ENCODE measurements at regions of chr19 and their contacts with region 1.

Region 1: DNA sequence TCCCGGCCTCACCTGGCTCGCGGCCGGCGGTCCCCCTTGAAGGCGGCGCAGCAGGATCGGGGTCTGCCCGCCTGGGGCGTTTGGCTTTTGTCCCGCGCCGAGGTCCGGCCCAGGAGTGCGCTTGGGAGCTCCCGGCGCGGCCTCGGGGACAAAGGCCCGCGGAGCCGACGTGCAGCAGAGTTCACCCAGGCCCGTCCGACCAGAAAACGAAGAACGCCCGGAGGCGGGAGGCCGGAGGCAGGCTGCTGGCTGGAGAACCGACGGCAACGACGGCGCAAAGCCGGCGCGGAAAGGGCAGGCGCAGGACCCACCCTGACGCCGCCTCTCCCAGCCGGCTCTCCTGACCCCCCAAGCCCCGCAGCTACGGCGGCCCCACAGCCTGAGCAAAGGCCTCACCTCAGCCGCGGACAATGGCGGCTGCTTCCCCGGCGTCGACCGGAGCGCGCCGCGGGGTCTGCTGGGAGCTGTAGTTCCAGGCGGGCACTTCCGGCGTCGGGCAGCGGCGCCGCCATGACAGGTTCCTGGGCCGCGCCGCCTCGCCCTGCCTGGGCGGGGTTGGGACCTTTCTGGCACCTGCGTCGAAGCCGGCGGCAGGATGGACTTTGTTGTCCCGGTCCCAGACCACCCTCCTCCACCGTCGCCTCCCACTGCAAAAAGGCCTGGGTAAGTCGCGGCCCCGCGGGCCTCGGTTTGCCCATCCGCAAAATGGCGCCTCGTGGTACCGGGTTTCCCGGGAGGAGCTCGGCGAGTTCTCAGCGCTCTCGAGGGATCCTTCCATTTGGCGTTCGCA is at the start of gene ZNF606:
- DNase-seq: peak; percentile 85
- H3K4me3 Mint-ChIP-seq: peak within 1 kb of the TSS; percentile 77
- H3K27ac Mint-ChIP-seq: peak within 1 kb of the TSS; percentile 77
- H3K4me1 Mint-ChIP-seq: peaks cover 30% of the 10 kb centered on the region
- H3K27me3 Mint-ChIP-seq: no peaks in the 10 kb centered on the region
- total RNA-seq, gene ZNF606: 9.6 to 9.7 TPM

Region 2: DNA sequence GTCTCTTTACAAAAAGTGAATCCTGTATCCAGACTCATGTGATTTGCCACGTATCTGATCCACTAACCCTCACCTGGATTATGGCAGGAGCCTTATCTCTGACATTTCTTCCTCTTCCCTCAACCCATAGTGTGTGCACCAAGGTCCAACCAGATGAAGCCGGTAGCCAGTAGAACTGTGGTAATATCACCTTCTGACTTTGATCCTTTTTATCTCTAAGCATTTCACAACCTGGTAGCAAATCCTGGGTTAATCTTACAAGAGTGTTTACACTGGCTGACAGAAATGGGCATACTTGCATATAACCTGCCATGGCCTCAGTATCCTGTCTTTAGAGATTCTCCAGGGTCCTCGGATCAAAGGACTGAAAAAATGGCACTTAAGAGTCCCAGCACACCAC is 88.0 kb before region 1 on chr19:
- CTCF ChIA-PET with region 1: no interaction called
- POLR2A ChIA-PET with region 1: interaction called, 17 read pairs
- DNase-seq: no peak
- H3K4me3 Mint-ChIP-seq: peak overlapping the region; percentile 47
- H3K27ac Mint-ChIP-seq: no peak overlapping the region
- H3K4me1 Mint-ChIP-seq: peaks cover 31% of the 10 kb centered on the region
- H3K27me3 Mint-ChIP-seq: no peaks in the 10 kb centered on the region